ENCODE measurements at regions of chr5 and their contacts with region 1.

Region 1: DNA sequence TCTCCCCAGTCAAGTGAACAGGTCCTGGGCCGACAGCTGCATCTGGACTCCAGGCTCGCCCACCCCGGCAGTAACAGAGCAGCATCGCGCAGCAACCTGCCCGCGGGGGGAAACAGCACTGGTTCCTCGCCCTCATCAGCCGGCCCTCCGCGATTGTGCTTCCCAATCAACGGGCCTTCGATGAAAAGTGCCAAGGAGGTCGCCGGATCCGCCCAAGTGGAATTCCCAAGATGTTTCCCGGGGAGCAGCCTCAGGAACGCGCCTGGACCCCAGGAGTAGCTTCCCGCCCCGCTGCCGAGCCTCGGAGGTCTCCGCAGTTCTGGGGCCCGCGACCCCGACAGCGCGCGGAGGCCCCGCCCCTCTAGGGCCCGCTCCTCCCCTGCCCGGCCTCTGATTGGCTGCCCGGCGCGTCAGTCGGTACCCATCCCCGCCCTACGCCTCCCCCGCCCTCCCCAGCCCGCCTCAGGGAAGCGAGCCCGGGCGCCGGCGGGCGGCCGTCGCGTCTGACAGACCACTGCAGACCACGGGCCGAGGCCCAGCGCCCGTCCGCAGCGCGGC is at the start of gene OTULINL:
- DNase-seq: peak; percentile 77
- H3K4me3 Mint-ChIP-seq: peak within 1 kb of the TSS; percentile 80
- H3K27ac Mint-ChIP-seq: peak within 1 kb of the TSS; percentile 61
- H3K4me1 Mint-ChIP-seq: peaks cover 35% of the 10 kb centered on the region
- H3K27me3 Mint-ChIP-seq: peaks cover 10% of the 10 kb centered on the region
- total RNA-seq, gene OTULINL: 13.6 and 14.0 TPM in 2 replicates

Region 2: GRCh38 chr5:14364576-14365472 is 216.6 kb before region 1 on chr5:
- intact Hi-C with region 1: loop called (anchors 2 kb)
- DNase-seq: no peak
- H3K4me3 Mint-ChIP-seq: no peak overlapping the region
- H3K27ac Mint-ChIP-seq: peak overlapping the region; percentile 24
- H3K4me1 Mint-ChIP-seq: peaks cover 54% of the 10 kb centered on the region
- H3K27me3 Mint-ChIP-seq: no peaks in the 10 kb centered on the region

Region 3: DNA sequence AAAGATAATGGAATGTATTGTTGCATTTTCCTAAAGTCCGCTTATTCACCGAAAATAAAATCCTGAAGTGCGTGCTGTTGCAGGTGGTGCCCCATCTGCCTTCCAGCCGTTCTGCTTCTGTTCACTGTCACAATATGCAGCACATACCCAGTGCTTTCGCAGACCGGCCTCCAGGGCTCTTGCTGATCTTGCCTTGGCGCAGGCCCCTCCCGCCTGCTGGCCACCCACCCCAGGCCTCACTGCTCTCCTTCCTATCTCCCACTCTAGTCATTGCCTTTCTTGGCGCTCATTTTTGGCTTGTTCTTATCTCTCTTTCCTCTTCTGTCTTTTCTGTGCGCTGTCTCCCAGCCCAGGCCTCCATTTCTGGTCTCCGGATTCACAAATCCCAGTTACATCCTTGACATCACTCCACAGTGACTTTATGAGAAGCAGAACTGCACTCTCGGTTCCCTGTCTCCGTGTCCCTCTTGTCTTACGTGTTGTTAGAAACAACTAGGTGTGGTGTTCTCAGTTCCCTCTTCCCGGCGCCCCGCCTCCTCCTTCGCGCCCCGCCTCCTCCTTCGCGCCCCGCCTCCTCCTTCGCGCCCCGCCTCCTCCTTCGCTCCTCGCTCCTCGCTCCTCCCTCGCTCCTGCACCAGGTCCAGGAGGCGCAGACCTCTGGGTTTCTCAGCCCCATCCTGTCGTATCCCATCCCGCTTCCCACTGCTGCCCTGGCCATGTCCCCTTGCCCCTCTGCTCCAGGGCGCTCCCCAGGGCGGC is 201.5 kb before region 1 on chr5:
- intact Hi-C with region 1: no loop called
- DNase-seq: no peak
- H3K4me3 Mint-ChIP-seq: no peak overlapping the region
- H3K27ac Mint-ChIP-seq: no peak overlapping the region
- H3K4me1 Mint-ChIP-seq: no peaks in the 10 kb centered on the region
- H3K27me3 Mint-ChIP-seq: peaks cover 4% of the 10 kb centered on the region

Region 4: GRCh38 chr5:14415024-14415697 is 166.3 kb before region 1 on chr5:
- intact Hi-C with region 1: loop called (anchors 2 kb)
- DNase-seq: no peak
- H3K4me3 Mint-ChIP-seq: peak overlapping the region; percentile 43
- H3K27ac Mint-ChIP-seq: peak overlapping the region; percentile 90
- H3K4me1 Mint-ChIP-seq: peaks cover 52% of the 10 kb centered on the region
- H3K27me3 Mint-ChIP-seq: peaks cover 7% of the 10 kb centered on the region

Region 5: DNA sequence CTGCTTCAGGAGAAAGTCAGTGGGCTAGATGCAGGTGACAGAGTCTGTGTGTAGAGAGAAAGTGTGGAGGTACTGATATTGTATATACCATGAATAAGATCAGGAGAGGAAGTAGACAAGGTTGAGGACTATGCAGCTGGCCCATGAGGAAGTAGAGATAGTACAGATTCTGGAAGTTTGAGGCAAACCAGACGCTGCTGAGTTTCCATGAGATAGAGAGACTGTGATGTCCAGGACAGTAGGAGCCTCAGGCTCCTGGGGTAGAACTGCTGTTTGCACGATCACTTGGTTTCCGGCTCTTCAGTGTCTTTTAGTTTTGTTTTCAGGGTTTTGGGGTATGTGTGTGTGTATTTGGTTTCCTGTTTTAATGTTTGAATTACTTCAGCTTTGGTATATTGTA is 13.8 kb after region 1 on chr5:
- intact Hi-C with region 1: loop called (anchors 1 kb)
- DNase-seq: peak; percentile 49
- H3K4me3 Mint-ChIP-seq: peak overlapping the region; percentile 78
- H3K27ac Mint-ChIP-seq: peak overlapping the region; percentile 98
- H3K4me1 Mint-ChIP-seq: peaks cover 76% of the 10 kb centered on the region
- H3K27me3 Mint-ChIP-seq: no peaks in the 10 kb centered on the region

Region 6: DNA sequence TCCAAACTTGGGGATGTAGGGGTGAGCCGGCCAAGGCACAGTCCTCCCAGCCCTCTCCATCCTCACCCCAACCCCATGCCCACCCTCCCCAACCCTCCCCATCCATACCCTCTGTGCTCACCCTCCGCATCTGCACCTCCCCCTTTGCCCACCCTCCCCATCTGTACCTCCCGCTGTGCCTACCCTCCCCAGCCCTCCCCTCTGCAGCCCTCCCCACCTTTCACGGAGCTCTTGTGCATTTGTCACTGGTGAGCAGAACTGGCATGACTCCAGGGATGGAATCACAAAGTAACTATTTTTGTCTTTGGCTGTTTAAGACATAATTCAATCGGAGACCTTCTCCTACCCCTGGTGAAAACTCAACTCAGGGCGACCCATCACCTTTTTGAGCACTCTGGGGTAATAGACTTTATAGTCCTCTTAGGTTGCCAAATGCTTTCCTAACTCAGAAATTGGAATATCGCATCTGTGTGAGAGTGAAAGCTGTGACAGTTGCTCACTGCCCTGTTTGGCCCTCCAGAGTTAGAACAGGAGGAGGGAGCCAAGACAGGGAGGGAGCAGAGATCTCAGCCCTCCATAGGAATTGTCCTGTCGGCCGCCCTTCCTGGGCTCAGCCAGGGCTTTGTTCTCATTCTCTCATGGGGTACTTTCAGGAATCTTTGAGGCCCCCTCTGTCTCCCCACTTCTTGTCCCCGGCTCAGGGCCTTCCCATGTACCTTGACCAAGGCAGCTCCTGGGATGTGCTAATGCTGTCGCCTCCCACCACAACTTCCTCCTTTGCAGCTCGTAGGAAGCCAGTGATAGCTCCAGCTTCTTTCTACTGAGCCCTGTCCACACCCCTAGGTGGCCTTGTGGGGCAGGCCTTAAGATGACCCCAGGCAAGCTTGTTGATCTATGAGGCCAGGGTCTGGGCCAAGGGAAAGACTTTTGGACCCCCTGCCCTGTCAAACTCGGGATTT is 119.3 kb after region 1 on chr5:
- intact Hi-C with region 1: no loop called
- DNase-seq: no peak
- H3K4me3 Mint-ChIP-seq: no peak overlapping the region
- H3K27ac Mint-ChIP-seq: peak overlapping the region; percentile 65
- H3K4me1 Mint-ChIP-seq: peaks cover 75% of the 10 kb centered on the region
- H3K27me3 Mint-ChIP-seq: no peaks in the 10 kb centered on the region

Region 7: GRCh38 chr5:16465544-16466466 is 1884.4 kb after region 1 on chr5 and contains the start of gene ZNF622:
- intact Hi-C with region 1: loop called (anchors 5 kb)
- DNase-seq: peak; percentile 86
- H3K4me3 Mint-ChIP-seq: peak within 1 kb of the TSS; percentile 99
- H3K27ac Mint-ChIP-seq: peak within 1 kb of the TSS; percentile 95
- H3K4me1 Mint-ChIP-seq: peaks cover 66% of the 10 kb centered on the region
- H3K27me3 Mint-ChIP-seq: no peaks in the 10 kb centered on the region
- total RNA-seq, gene ZNF622: 54.4 and 55.6 TPM in 2 replicates

Measured in activated T-helper 1 cell treated with anti-CD3 and anti-CD28 coated beads, Interleukin-12 subunit alpha, Interleukin-12 subunit beta, Interleukin-2, Interleukin-4 antibody, amounts not matched to agents 30 ng/mL and 10 ng/mL and 1 ng/mL, durations not matched to agents 14 hours and 24 hours and 36 hours (primary cell).